Gastrocnemius medialis (tissue), 4 donors: ENCODE measurements at regions of chr10 and their contacts with region 1.

Region 1: GRCh38 chr10:89701238-89702120 is at the start of gene KIF20B:
- DNase-seq: peak; percentile 93 to 94
- ATAC-seq: peak; percentile 99 to 100
- H3K4me3 ChIP-seq: peak within 1 kb of the TSS; percentile 73 to 89 (median 82)
- H3K27ac ChIP-seq: peak within 1 kb of the TSS; percentile 89 to 93 (median 91)
- H3K4me1 ChIP-seq: peaks cover 9 to 21% of the 10 kb centered on the region in 2 donors
- H3K27me3 ChIP-seq: no peaks in the 10 kb centered on the region
- CTCF ChIP-seq: peak in 4 of 5 experiments; percentile 55 to 75 (median 66)
- POLR2A ChIP-seq: peak; percentile 34 to 57
- total RNA-seq, gene KIF20B: 0.65 to 1.0 (median 0.86) TPM

Region 2: DNA sequence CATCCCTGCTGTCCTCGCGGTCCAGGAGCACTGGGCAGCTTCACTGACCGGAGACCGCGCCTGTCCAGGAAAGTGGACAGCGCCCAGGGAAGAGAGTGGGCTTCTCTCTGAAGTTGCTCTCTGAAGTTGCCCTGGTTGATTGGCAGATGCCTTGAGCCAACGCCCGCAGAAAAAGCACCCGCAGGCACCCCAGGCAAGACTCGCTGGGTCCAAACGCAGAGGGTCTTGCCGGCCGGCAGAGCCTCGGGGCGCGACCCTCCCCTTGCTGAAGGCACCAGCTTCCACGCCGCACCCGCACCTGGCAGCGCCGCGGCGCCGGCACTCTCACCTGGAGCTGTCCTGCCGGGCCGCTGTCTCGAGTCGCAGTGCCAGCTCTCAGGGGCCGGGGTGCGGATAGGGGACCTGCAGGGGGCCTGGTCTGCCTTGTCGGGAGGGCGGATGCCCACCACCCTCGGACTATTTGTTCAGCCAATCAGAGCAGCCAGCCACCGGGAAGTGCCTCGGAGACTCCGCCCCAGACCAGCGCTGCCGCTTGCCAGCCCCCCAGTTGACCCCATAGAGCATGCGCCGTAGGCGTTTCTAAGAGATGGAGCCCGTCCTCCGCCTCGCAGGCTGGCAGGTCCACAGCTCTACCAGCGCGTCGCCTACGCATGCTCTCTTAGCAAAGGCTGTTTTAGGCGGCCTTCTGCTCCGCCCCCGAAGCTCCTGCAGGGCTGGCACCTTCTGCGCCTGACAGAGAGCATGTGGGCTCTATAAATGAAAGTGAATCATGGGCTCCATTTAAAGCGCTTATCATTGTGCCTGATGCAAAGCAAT is 449.9 kb before region 1 on chr10 and contains the start of gene LIPA:
- in situ Hi-C with region 1: no loop called
- intact Hi-C with region 1: loop called (anchors 5 kb)
- DNase-seq: peak; percentile 87 to 94
- ATAC-seq: peak; percentile 95 to 97
- H3K4me3 ChIP-seq: peak within 1 kb of the TSS; percentile 78 to 93 (median 84)
- H3K27ac ChIP-seq: peak within 1 kb of the TSS; percentile 73 to 79 (median 77)
- H3K4me1 ChIP-seq: peaks cover 0 to 9% of the 10 kb centered on the region in 2 donors
- H3K27me3 ChIP-seq: no peaks in the 10 kb centered on the region
- CTCF ChIP-seq: no peak
- POLR2A ChIP-seq: peak; percentile 38 to 43
- total RNA-seq, gene LIPA: 7.7 to 11.4 (median 9.3) TPM

Region 3: DNA sequence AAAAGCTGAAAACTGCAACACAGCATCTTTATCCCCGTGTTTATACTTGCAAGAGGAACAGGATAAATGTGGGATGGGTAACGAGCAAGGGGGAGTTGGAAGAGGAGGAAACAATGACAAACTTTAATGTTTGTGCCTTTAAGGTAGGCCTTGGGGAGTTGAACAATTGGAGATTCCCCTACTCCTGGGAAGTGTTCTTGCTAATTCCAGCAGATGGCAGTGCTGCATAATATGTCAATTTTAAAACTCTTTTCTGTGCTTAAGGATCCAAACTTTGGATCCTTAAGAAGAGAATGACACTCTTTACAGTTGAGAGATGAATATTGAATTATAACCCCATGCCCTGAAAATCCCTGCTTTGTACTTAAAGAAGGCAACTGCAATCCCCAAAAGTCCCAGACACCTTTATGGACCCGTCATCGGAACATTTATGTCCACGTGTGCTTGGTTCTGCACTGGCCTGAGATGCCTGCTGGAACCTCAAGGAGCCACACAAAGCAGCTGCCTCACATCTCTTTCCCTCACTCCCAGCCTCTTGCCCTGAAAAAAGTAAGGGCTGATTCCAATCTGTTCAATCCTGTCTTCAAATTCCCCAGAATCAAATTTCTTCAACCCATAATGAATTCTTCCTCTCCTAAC is 275.1 kb before region 1 on chr10:
- in situ Hi-C with region 1: loop called (anchors 5 to 25 kb)
- intact Hi-C with region 1: loop called (anchors 1 kb)
- DNase-seq: no peak
- ATAC-seq: peak; percentile 83 to 87
- H3K4me3 ChIP-seq: no peak overlapping the region
- H3K27ac ChIP-seq: no peak overlapping the region
- H3K4me1 ChIP-seq: peaks cover 7 to 29% of the 10 kb centered on the region in 2 donors
- H3K27me3 ChIP-seq: no peaks in the 10 kb centered on the region
- CTCF ChIP-seq: peak; percentile 75 to 87 (median 83)
- POLR2A ChIP-seq: no peak

Region 4: GRCh38 chr10:89574368-89574767 is 127.1 kb before region 1 on chr10:
- in situ Hi-C with region 1: loop called in 1 of 4 experiments (anchors 10 kb)
- intact Hi-C with region 1: no loop called
- DNase-seq: no peak
- ATAC-seq: no peak
- H3K4me3 ChIP-seq: no peak overlapping the region
- H3K27ac ChIP-seq: no peak overlapping the region
- H3K4me1 ChIP-seq: no peaks in the 10 kb centered on the region
- H3K27me3 ChIP-seq: no peaks in the 10 kb centered on the region
- CTCF ChIP-seq: no peak
- POLR2A ChIP-seq: no peak

Region 5: DNA sequence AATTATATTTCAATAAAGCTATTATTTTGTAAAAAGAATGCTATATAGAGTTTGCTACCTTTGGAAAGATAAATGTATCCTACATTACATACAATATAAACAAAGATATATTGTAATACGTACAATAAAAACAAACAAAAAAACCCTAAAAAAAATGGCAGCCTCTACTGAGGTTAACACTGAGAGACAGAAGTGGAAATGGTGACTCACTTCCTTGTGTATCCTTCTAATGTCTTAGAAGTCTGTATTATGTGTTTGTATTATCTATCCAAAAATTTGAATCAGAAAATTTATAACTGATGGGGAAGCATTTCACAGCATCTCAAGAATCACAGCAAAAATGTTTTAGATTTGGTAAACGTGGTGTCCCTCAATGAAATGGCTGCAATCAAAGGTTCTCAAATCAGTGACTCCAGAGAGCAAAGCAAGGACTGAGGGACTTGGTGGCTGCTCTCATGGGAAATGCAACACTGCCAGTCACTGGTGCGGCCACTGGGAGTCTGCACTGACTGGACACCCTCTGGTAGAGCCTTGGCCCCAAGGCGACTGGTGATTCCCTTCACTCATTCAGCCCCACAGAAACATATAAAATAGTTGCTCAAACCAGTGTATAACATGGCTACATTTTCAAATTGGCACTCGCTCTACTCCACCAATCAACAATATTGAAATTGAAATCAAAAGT is 110.2 kb before region 1 on chr10:
- in situ Hi-C with region 1: loop called in 1 of 4 experiments (anchors 10 kb)
- intact Hi-C with region 1: loop called (anchors 1 kb)
- DNase-seq: peak in 1 of 2 donors; percentile 54
- ATAC-seq: peak; percentile 37 to 79
- H3K4me3 ChIP-seq: no peak overlapping the region
- H3K27ac ChIP-seq: peak overlapping the region; percentile 67 to 79 (median 74)
- H3K4me1 ChIP-seq: peaks cover 40 to 52% of the 10 kb centered on the region in 2 donors
- H3K27me3 ChIP-seq: no peaks in the 10 kb centered on the region
- CTCF ChIP-seq: peak in 2 of 5 experiments; percentile 11 to 30
- POLR2A ChIP-seq: no peak

Region 6: DNA sequence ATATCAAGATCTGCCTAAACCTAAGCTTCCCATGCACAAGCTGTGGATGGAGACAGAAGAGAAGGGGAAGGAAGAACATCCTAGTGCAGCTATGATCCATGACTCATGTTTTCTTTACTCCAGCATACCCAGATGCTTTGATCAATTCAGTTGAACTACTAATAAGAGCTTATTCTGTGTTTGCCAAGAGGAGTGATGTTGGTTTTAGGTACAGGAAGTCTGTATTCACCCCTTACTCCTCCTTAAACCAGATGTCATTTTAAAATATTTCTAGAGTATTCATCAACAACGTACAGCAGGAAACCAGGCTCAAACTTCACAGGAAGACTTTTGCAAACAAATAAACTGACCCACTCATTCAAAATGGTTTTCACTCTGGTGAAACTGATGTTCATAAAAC is 85.7 kb before region 1 on chr10:
- in situ Hi-C with region 1: no loop called
- intact Hi-C with region 1: no loop called
- DNase-seq: no peak
- ATAC-seq: no peak
- H3K4me3 ChIP-seq: no peak overlapping the region
- H3K27ac ChIP-seq: no peak overlapping the region
- H3K4me1 ChIP-seq: peaks cover 10 to 11% of the 10 kb centered on the region in 2 donors
- H3K27me3 ChIP-seq: no peaks in the 10 kb centered on the region
- CTCF ChIP-seq: no peak
- POLR2A ChIP-seq: no peak

Region 7: GRCh38 chr10:89643431-89644331 is 57.8 kb before region 1 on chr10:
- in situ Hi-C with region 1: loop called in 1 of 4 experiments (anchors 10 kb)
- intact Hi-C with region 1: loop called (anchors 1 kb)
- DNase-seq: peak; percentile 89 to 91
- ATAC-seq: peak; percentile 77 to 78
- H3K4me3 ChIP-seq: peak overlapping the region; percentile 69 to 92 (median 80)
- H3K27ac ChIP-seq: peak overlapping the region; percentile 93 to 98 (median 96)
- H3K4me1 ChIP-seq: peaks cover 43 to 57% of the 10 kb centered on the region in 2 donors
- H3K27me3 ChIP-seq: no peaks in the 10 kb centered on the region
- CTCF ChIP-seq: no peak
- POLR2A ChIP-seq: peak; percentile 97 to 99

Region 8: GRCh38 chr10:89655722-89656121 is 45.8 kb before region 1 on chr10:
- in situ Hi-C with region 1: no loop called
- intact Hi-C with region 1: no loop called
- DNase-seq: no peak
- ATAC-seq: no peak
- H3K4me3 ChIP-seq: no peak overlapping the region
- H3K27ac ChIP-seq: no peak overlapping the region
- H3K4me1 ChIP-seq: peaks cover 3 to 8% of the 10 kb centered on the region in 2 donors
- H3K27me3 ChIP-seq: no peaks in the 10 kb centered on the region
- CTCF ChIP-seq: no peak
- POLR2A ChIP-seq: no peak

Region 9: DNA sequence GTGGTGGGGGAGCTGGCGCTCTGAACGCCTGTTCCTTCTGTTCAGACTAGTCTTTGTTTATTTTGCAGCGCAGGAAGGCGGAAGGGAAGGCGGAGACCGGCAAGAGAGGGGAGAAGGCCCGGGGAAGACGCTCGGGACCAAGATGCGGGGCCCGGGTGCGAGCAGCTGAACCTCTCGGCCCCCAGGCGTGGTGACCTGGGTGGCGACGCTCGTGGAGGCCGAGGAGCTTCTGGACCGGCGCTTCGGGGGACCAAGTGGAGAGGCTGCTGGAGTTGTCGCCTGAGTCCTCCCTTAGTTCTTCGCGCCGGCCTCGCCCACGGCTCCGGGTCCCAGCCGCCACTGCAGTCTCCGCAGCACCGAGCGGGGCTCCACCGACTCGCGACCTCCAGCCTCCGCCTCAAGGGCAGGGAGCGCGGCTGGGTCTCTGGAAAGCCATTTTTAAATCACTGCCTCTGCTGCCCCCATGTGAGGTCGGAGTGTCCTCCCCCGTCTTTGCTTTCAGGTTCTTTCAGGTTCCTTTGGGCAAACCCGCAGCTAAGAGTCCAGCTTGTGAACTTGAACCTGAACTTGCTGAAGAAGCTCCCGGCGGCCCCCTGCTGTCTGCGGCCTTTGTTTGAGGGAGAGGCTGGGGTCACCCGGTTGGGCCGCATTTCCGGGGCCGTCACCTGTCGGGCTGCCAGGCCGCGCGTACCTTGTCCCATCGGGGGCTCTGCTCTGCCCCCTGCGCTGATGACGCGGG is 135.8 kb after region 1 on chr10:
- in situ Hi-C with region 1: no loop called
- intact Hi-C with region 1: no loop called
- DNase-seq: no peak
- ATAC-seq: peak in 1 of 2 donors; percentile 21
- H3K4me3 ChIP-seq: peak overlapping the region; percentile 38 to 52 (median 47)
- H3K27ac ChIP-seq: no peak overlapping the region
- H3K4me1 ChIP-seq: no peaks in the 10 kb centered on the region
- H3K27me3 ChIP-seq: peaks cover 0 to 23% (median 22%) of the 10 kb centered on the region in 3 donors
- CTCF ChIP-seq: no peak
- POLR2A ChIP-seq: no peak